ENCODE measurements at regions of chrX and their contacts with region 1.

Region 1: GRCh38 chrX:15674841-15675489 is 10.4 kb upstream of the CLTRN start:
- DNase-seq: peak; percentile 92
- H3K4me3 ChIP-seq: peak overlapping the region; percentile 96
- H3K27ac ChIP-seq: peak overlapping the region; percentile 86
- H3K4me1 ChIP-seq: peaks cover 24% of the 10 kb centered on the region
- CTCF ChIP-seq: no peak

Region 2: GRCh38 chrX:15254852-15255251 is 420.1 kb before region 1 on chrX:
- CTCF ChIA-PET with region 1: no interaction called
- POLR2A ChIA-PET with region 1: no interaction called
- intact Hi-C with region 1: no loop called
- DNase-seq: no peak
- H3K4me3 ChIP-seq: no peak overlapping the region
- H3K27ac ChIP-seq: no peak overlapping the region
- H3K4me1 ChIP-seq: no peaks in the 10 kb centered on the region
- CTCF ChIP-seq: no peak

Region 3: GRCh38 chrX:15335135-15336022 is 339.6 kb before region 1 on chrX and contains the start of gene PIGA:
- CTCF ChIA-PET with region 1: no interaction called
- POLR2A ChIA-PET with region 1: no interaction called
- intact Hi-C with region 1: loop called (anchors 10 kb)
- DNase-seq: peak; percentile 94
- H3K4me3 ChIP-seq: peak within 1 kb of the TSS; percentile 97
- H3K27ac ChIP-seq: peak within 1 kb of the TSS; percentile 13
- H3K4me1 ChIP-seq: peaks cover 10% of the 10 kb centered on the region
- CTCF ChIP-seq: no peak
- total RNA-seq, gene PIGA: 8.1 and 13.1 TPM in 2 replicates

Region 4: GRCh38 chrX:15493118-15493962 is 181.6 kb before region 1 on chrX and contains the start of gene PIR:
- CTCF ChIA-PET with region 1: no interaction called
- POLR2A ChIA-PET with region 1: no interaction called
- intact Hi-C with region 1: loop called (anchors 10 kb)
- DNase-seq: peak; percentile 50
- H3K4me3 ChIP-seq: peak within 1 kb of the TSS; percentile 63
- H3K27ac ChIP-seq: no peak within 1 kb of the TSS
- H3K4me1 ChIP-seq: peaks cover 6% of the 10 kb centered on the region
- CTCF ChIP-seq: peak; percentile 66
- total RNA-seq, gene PIR: 0.51 and 1.9 TPM in 2 replicates

Region 5: GRCh38 chrX:15838017-15838416 is 163.1 kb after region 1 on chrX:
- CTCF ChIA-PET with region 1: no interaction called
- POLR2A ChIA-PET with region 1: no interaction called
- intact Hi-C with region 1: no loop called
- DNase-seq: peak; percentile 28
- H3K4me3 ChIP-seq: no peak overlapping the region
- H3K27ac ChIP-seq: no peak overlapping the region
- H3K4me1 ChIP-seq: no peaks in the 10 kb centered on the region
- CTCF ChIP-seq: peak; percentile 49; the same call in 1 of the 2 replicates

Measured in OCI-LY7 (cell line).